Caco-2 (cell line): ENCODE measurements at regions of chr19 and their contacts with region 1.

Region 1: DNA sequence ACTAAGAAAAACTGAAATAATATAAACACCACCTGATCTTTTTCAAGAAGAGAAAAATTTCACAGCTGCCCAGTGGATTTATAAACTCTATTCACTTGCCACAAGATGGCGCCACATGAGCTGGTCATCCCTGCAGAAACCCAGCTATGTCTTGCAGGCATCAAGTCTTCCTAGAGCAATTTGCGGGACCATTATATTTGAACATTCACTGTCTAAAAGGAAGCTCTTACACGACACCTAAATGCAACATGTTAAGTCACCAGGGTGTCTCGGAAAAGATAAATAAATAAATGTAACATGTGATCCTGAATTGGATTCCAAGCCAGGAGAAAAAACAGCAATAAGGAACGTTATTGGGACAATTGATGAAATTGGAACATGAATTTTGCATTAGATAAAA is 20.3 kb upstream of the AKT2 start:
- DNase-seq: peak; percentile 81 to 83
- H3K4me3 ChIP-seq: no peak overlapping the region
- H3K4me3 Mint-ChIP-seq: no peak overlapping the region
- H3K27ac Mint-ChIP-seq: no peak overlapping the region
- H3K4me1 ChIP-seq: no peaks in the 10 kb centered on the region
- H3K4me1 Mint-ChIP-seq: no peaks in the 10 kb centered on the region
- H3K27me3 ChIP-seq: no peaks in the 10 kb centered on the region
- H3K27me3 Mint-ChIP-seq: no peaks in the 10 kb centered on the region
- CTCF ChIP-seq: peak; percentile 79 to 81

Region 2: GRCh38 chr19:40200341-40201099 is 104.9 kb before region 1 on chr19:
- CTCF ChIA-PET with region 1: no interaction called
- POLR2A ChIA-PET with region 1: no interaction called
- intact Hi-C with region 1: no loop called
- DNase-seq: no peak
- H3K4me3 ChIP-seq: no peak overlapping the region
- H3K4me3 Mint-ChIP-seq: no peak overlapping the region
- H3K27ac Mint-ChIP-seq: no peak overlapping the region
- H3K4me1 ChIP-seq: no peaks in the 10 kb centered on the region
- H3K4me1 Mint-ChIP-seq: no peaks in the 10 kb centered on the region
- H3K27me3 ChIP-seq: no peaks in the 10 kb centered on the region
- H3K27me3 Mint-ChIP-seq: no peaks in the 10 kb centered on the region
- CTCF ChIP-seq: no peak

Region 3: GRCh38 chr19:40257057-40257517 is 48.3 kb before region 1 on chr19:
- CTCF ChIA-PET with region 1: no interaction called
- POLR2A ChIA-PET with region 1: no interaction called
- intact Hi-C with region 1: no loop called
- DNase-seq: no peak
- H3K4me3 ChIP-seq: no peak overlapping the region
- H3K4me3 Mint-ChIP-seq: no peak overlapping the region
- H3K27ac Mint-ChIP-seq: no peak overlapping the region
- H3K4me1 ChIP-seq: peaks cover 12% of the 10 kb centered on the region
- H3K4me1 Mint-ChIP-seq: peaks cover 12% of the 10 kb centered on the region
- H3K27me3 ChIP-seq: no peaks in the 10 kb centered on the region
- H3K27me3 Mint-ChIP-seq: no peaks in the 10 kb centered on the region
- CTCF ChIP-seq: no peak

Region 4: GRCh38 chr19:40294560-40294959 is 10.8 kb before region 1 on chr19:
- CTCF ChIA-PET with region 1: interaction called, 14 read pairs
- POLR2A ChIA-PET with region 1: interaction called, 3 read pairs
- intact Hi-C with region 1: no loop called
- DNase-seq: no peak
- H3K4me3 ChIP-seq: no peak overlapping the region
- H3K4me3 Mint-ChIP-seq: no peak overlapping the region
- H3K27ac Mint-ChIP-seq: no peak overlapping the region
- H3K4me1 ChIP-seq: no peaks in the 10 kb centered on the region
- H3K4me1 Mint-ChIP-seq: no peaks in the 10 kb centered on the region
- H3K27me3 ChIP-seq: no peaks in the 10 kb centered on the region
- H3K27me3 Mint-ChIP-seq: no peaks in the 10 kb centered on the region
- CTCF ChIP-seq: no peak

Region 5: GRCh38 chr19:40425450-40426287 is 120.3 kb after region 1 on chr19 and contains the start of gene SERTAD1:
- CTCF ChIA-PET with region 1: interaction called, 11 read pairs
- POLR2A ChIA-PET with region 1: interaction called, 11 read pairs
- intact Hi-C with region 1: no loop called
- DNase-seq: peak; percentile 100
- H3K4me3 ChIP-seq: peak within 1 kb of the TSS; percentile 46
- H3K4me3 Mint-ChIP-seq: peak within 1 kb of the TSS; percentile 93
- H3K27ac Mint-ChIP-seq: peak within 1 kb of the TSS; percentile 90
- H3K4me1 ChIP-seq: no peaks in the 10 kb centered on the region
- H3K4me1 Mint-ChIP-seq: peaks cover 8% of the 10 kb centered on the region
- H3K27me3 ChIP-seq: no peaks in the 10 kb centered on the region
- H3K27me3 Mint-ChIP-seq: no peaks in the 10 kb centered on the region
- CTCF ChIP-seq: peak; percentile 91 to 95
- total RNA-seq, gene SERTAD1: 7.7 and 8.6 TPM in 2 replicates

Region 6: DNA sequence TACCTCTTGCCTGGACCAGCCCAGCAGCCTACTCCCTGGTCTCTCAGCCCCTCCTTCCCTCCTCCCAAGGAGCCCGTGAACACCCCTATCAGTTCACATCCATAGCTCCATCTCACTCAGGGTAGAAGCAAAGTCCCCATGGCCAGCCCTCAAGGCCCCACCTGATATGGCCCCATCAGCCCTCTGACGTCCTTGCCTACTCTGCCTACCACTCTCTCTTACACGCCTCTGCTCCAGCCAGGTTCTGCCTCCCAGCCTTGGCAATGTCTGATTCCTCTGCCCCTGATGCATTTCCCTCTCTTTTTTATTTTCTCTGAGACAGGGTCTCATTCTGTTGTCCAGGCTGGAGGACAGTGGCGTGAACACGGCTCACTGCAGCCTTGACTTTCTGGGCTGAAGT is 146.6 kb after region 1 on chr19:
- CTCF ChIA-PET with region 1: interaction called, 10 read pairs
- POLR2A ChIA-PET with region 1: interaction called, 3 read pairs
- intact Hi-C with region 1: no loop called
- DNase-seq: no peak
- H3K4me3 ChIP-seq: no peak overlapping the region
- H3K4me3 Mint-ChIP-seq: no peak overlapping the region
- H3K27ac Mint-ChIP-seq: peak overlapping the region; percentile 84
- H3K4me1 ChIP-seq: peaks cover 18% of the 10 kb centered on the region
- H3K4me1 Mint-ChIP-seq: peaks cover 17% of the 10 kb centered on the region
- H3K27me3 ChIP-seq: no peaks in the 10 kb centered on the region
- H3K27me3 Mint-ChIP-seq: no peaks in the 10 kb centered on the region
- CTCF ChIP-seq: no peak

Region 7: GRCh38 chr19:40542202-40542859 is 236.9 kb after region 1 on chr19:
- CTCF ChIA-PET with region 1: interaction called, 11 read pairs
- POLR2A ChIA-PET with region 1: no interaction called
- intact Hi-C with region 1: loop called (anchors 10 kb)
- DNase-seq: no peak
- H3K4me3 ChIP-seq: no peak overlapping the region
- H3K4me3 Mint-ChIP-seq: no peak overlapping the region
- H3K27ac Mint-ChIP-seq: no peak overlapping the region
- H3K4me1 ChIP-seq: no peaks in the 10 kb centered on the region
- H3K4me1 Mint-ChIP-seq: no peaks in the 10 kb centered on the region
- H3K27me3 ChIP-seq: no peaks in the 10 kb centered on the region
- H3K27me3 Mint-ChIP-seq: peaks cover 2% of the 10 kb centered on the region
- CTCF ChIP-seq: no peak